Activated B cell treated with CpG ODN at 0.5 μM for 24 hours (primary cell): ENCODE measurements at regions of chr11 and their contacts with region 1.

Region 1: GRCh38 chr11:3854977-3855807 is at the start of gene STIM1:
- DNase-seq: peak; percentile 96
- ATAC-seq: peak; percentile 74
- H3K4me3 Mint-ChIP-seq: peak within 1 kb of the TSS; percentile 96
- H3K27ac Mint-ChIP-seq: peak within 1 kb of the TSS; percentile 99
- H3K4me1 Mint-ChIP-seq: peaks cover 63% of the 10 kb centered on the region
- H3K27me3 Mint-ChIP-seq: no peaks in the 10 kb centered on the region
- CTCF ChIP-seq: peak; percentile 58
- total RNA-seq, gene STIM1: 37.3 and 38.4 TPM in 2 replicates

Region 2: GRCh38 chr11:3824714-3825472 is 30.3 kb before region 1 on chr11:
- CTCF ChIA-PET with region 1: interaction called, 156 read pairs
- POLR2A ChIA-PET with region 1: interaction called, 12 read pairs
- intact Hi-C with region 1: no loop called
- DNase-seq: peak; percentile 70
- ATAC-seq: peak; percentile 98
- H3K4me3 Mint-ChIP-seq: no peak overlapping the region
- H3K27ac Mint-ChIP-seq: peak overlapping the region; percentile 42
- H3K4me1 Mint-ChIP-seq: peaks cover 28% of the 10 kb centered on the region
- H3K27me3 Mint-ChIP-seq: no peaks in the 10 kb centered on the region
- CTCF ChIP-seq: peak; percentile 48

Region 3: GRCh38 chr11:3873712-3874349 is 18.6 kb after region 1 on chr11:
- CTCF ChIA-PET with region 1: interaction called, 22 read pairs
- POLR2A ChIA-PET with region 1: interaction called, 81 read pairs
- intact Hi-C with region 1: loop called (anchors 2 kb)
- DNase-seq: no peak
- ATAC-seq: peak; percentile 82
- H3K4me3 Mint-ChIP-seq: peak overlapping the region; percentile 20
- H3K27ac Mint-ChIP-seq: peak overlapping the region; percentile 50
- H3K4me1 Mint-ChIP-seq: peaks cover 85% of the 10 kb centered on the region
- H3K27me3 Mint-ChIP-seq: no peaks in the 10 kb centered on the region
- CTCF ChIP-seq: no peak

Region 4: DNA sequence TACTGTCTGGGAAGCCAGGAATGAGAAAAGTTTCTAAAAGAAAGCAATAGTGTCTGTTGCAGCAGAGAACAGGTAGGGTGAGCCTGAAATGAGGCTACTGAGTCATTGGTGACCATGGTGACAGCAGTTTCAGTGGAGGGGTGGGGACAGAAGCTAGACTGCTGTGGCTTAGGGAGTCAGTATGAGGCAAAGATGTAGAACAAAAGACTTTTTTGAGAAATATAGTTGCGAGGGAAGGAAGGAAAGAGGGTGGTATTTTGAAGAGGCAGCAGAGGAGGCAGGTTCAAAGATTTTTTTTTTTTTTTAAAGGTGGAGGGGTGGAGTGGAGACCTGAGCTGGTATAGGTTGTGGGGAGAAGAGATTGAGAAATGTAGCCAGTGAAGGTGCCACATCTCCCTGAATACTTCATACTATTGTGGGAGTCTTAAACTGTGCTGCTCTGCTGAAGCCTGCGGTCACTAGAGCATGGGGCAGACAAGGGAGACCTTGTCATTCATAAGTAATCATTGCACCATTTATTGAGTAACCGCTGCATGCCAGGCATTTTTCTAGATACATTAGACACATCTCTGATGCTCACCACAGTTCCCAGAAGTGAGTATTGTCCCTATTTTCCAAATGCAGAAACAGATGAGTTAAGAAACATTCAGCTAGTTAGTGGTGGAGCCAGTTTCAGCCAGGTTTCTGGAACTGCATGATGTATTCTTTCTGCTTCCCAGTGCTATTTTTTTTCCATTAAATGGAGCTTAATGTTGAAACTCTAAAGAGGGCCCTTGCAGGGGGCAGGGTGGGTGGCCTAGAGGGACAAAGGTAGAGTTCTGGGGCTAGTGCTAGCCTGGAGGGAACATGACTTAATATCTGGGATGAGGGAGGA is 50.1 kb after region 1 on chr11:
- CTCF ChIA-PET with region 1: interaction called, 21 read pairs
- POLR2A ChIA-PET with region 1: interaction called, 19 read pairs
- intact Hi-C with region 1: no loop called
- DNase-seq: no peak
- ATAC-seq: peak; percentile 79
- H3K4me3 Mint-ChIP-seq: peak overlapping the region; percentile 17
- H3K27ac Mint-ChIP-seq: peak overlapping the region; percentile 8
- H3K4me1 Mint-ChIP-seq: peaks cover 84% of the 10 kb centered on the region
- H3K27me3 Mint-ChIP-seq: no peaks in the 10 kb centered on the region
- CTCF ChIP-seq: no peak

Region 5: GRCh38 chr11:3971756-3972404 is 116.7 kb after region 1 on chr11:
- CTCF ChIA-PET with region 1: interaction called, 15 read pairs
- POLR2A ChIA-PET with region 1: interaction called, 7 read pairs
- intact Hi-C with region 1: loop called (anchors 1 kb)
- DNase-seq: no peak
- ATAC-seq: peak; percentile 60
- H3K4me3 Mint-ChIP-seq: no peak overlapping the region
- H3K27ac Mint-ChIP-seq: no peak overlapping the region
- H3K4me1 Mint-ChIP-seq: peaks cover 11% of the 10 kb centered on the region
- H3K27me3 Mint-ChIP-seq: no peaks in the 10 kb centered on the region
- CTCF ChIP-seq: no peak

Region 6: DNA sequence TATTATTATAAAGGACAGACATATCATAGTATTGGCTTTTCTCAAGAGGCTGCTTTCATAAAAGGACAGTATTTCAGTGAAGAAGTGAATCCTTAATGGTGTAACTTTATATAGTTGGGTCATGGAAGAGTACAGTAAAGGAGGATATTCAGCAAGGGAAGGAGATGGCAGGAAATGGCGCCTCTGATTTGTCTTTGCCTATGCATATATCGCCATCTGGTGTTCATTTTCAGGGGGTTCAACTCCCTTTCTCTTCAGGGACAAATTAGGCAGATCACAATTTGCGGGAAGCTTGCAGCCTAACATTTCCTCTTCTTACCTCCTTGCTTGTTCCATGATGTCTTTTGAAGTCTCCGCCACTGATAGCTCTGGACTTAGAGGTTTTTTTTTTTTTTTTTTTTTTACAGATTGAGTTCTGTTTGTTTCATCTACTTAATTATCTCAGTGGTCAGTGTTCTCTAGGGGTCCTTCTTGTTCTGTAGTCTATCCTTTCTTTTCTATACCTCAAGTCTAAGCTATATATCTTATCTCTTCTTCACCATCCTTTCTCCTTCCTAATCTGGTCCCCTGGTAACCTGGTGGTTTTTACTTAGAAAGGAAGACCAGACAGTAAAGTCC is 217.6 kb after region 1 on chr11:
- CTCF ChIA-PET with region 1: interaction called, 526 read pairs
- POLR2A ChIA-PET with region 1: interaction called, 37 read pairs
- intact Hi-C with region 1: loop called (anchors 1 kb)
- DNase-seq: no peak
- ATAC-seq: peak; percentile 79
- H3K4me3 Mint-ChIP-seq: no peak overlapping the region
- H3K27ac Mint-ChIP-seq: peak overlapping the region; percentile 77
- H3K4me1 Mint-ChIP-seq: peaks cover 18% of the 10 kb centered on the region
- H3K27me3 Mint-ChIP-seq: no peaks in the 10 kb centered on the region
- CTCF ChIP-seq: no peak

Region 7: DNA sequence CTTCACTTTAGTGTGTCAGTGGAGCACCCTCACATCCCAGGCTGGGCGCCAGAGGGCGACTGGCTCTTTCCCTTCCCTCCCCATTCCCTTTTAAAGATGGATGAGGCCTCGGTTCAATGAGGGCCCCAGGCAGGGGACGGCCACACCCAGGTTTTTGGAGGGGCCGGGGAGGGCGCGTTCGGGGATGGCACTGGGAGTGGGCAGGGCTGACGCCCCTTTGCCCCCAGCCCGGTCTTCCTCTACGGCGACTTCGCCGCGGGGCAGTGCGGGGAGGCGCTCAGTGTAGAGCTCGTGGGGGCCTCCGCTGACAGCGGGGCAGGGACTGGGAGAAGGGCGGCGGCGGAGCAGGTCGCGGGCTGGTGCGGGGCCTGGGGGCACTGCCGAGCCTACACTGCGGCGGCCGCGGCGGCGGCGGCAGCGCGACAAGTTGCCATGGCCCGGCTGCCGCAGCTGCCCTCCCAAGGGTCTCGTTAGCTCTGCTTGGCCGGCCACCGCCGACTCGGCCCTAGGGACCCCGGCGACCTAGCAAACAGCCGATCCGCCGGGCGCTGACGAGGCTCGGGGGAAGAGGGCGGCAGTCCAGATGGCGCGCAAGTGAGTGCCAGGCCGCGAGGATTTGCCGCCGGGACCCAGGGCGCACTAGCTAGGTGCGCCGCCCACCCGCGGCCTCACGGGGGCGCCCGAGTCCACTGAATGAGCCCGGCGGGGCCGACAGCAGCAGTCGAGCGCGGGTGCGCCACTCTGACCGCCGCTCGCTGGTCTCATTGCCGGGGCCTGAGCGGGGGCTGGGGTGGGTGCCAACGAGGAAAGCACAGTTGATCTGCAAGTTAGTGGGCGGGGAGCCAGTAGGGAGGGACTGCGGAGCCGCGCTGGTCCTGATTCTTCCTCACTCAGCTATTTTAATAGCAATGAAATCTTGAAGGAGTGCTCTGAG is 332.1 kb after region 1 on chr11:
- CTCF ChIA-PET with region 1: no interaction called
- POLR2A ChIA-PET with region 1: no interaction called
- intact Hi-C with region 1: no loop called
- DNase-seq: peak; percentile 87
- ATAC-seq: peak; percentile 95
- H3K4me3 Mint-ChIP-seq: peak overlapping the region; percentile 75
- H3K27ac Mint-ChIP-seq: no peak overlapping the region
- H3K4me1 Mint-ChIP-seq: peaks cover 4% of the 10 kb centered on the region
- H3K27me3 Mint-ChIP-seq: peaks cover 20% of the 10 kb centered on the region
- CTCF ChIP-seq: peak; percentile 91